Activated B cell treated with CpG ODN at 0.5 μM for 24 hours (primary cell): ENCODE measurements at regions of chr11 and their contacts with region 1.

Region 1: DNA sequence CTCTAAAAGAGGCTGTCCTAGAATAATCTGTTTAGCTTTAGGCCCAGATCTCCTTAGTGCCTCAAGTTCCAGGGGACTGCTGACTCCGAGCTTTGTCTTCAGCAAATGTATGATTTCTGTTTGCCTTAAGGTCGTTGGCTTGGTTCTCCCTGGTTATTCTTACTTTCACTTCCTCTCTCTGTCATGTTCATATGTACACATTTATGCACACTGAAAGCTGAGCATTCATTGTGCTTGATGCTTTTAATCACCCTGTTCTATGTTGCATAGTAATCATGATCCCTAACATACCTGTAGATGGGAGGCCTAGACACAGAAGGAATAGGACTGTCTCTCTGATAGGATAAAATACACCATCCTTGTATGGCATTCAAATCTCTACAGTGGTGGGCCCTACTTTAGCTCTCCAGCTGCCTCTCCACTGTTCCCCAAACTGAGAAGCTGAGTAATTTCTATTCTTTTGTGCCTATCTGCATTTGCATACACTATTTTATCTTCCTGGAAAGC is 7.2 kb downstream of the PPFIBP2 start:
- DNase-seq: no peak
- ATAC-seq: peak; percentile 66
- H3K4me3 Mint-ChIP-seq: no peak overlapping the region
- H3K27ac Mint-ChIP-seq: no peak overlapping the region
- H3K4me1 Mint-ChIP-seq: no peaks in the 10 kb centered on the region
- H3K27me3 Mint-ChIP-seq: no peaks in the 10 kb centered on the region
- CTCF ChIP-seq: no peak

Region 2: DNA sequence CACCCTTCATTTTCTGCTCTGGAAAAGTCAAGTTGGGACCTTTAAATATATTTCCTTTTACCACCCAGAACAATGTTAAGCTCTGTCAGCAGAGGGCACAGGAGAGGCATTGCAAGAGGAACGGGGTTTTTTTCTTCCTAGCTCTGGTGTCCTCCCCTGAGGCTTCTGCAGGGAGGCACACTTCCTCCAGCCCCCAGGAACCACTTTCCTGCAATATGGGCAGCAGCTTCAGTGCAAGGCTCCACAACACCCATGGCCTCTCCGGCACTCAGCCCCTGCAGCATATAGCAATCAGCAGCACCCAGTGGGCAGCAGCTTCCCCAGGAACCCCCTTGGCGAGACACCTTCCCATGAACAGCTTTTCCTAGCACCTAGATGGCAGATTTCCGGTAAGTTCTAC is 167.9 kb before region 1 on chr11:
- CTCF ChIA-PET with region 1: interaction called, 13 read pairs
- POLR2A ChIA-PET with region 1: no interaction called
- intact Hi-C with region 1: no loop called
- DNase-seq: peak; percentile 23
- ATAC-seq: peak; percentile 62
- H3K4me3 Mint-ChIP-seq: no peak overlapping the region
- H3K27ac Mint-ChIP-seq: no peak overlapping the region
- H3K4me1 Mint-ChIP-seq: peaks cover 3% of the 10 kb centered on the region
- H3K27me3 Mint-ChIP-seq: peaks cover 7% of the 10 kb centered on the region
- CTCF ChIP-seq: no peak

Region 3: GRCh38 chr11:7473717-7474116 is 47.3 kb before region 1 on chr11:
- CTCF ChIA-PET with region 1: no interaction called
- POLR2A ChIA-PET with region 1: interaction called, 3 read pairs
- intact Hi-C with region 1: loop called (anchors 1 kb)
- DNase-seq: peak; percentile 31
- ATAC-seq: peak; percentile 99
- H3K4me3 Mint-ChIP-seq: peak overlapping the region; percentile 47
- H3K27ac Mint-ChIP-seq: peak overlapping the region; percentile 74
- H3K4me1 Mint-ChIP-seq: peaks cover 29% of the 10 kb centered on the region
- H3K27me3 Mint-ChIP-seq: no peaks in the 10 kb centered on the region
- CTCF ChIP-seq: no peak

Region 4: DNA sequence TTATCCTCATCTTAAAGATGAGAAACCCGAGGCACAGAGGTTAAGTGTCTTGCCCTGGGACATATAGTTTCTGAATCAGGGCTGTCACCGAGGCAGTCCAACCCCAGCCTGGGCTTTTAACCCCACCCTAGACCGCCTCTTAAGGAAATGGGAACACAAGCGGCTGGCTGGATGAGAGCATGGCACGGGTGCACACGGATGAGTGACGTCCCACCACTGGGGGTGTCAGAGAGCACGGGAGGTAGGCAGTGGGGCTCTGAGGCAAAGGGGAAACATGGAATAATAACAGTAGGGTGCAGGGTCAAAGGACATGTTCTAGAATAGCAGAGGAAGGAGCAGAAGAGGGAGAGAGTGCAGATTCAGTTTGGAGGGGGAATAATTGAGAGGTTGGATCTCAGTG is 15.1 kb after region 1 on chr11:
- CTCF ChIA-PET with region 1: interaction called, 5 read pairs
- POLR2A ChIA-PET with region 1: interaction called, 32 read pairs
- intact Hi-C with region 1: loop called (anchors 2 kb)
- DNase-seq: no peak
- ATAC-seq: no peak
- H3K4me3 Mint-ChIP-seq: no peak overlapping the region
- H3K27ac Mint-ChIP-seq: no peak overlapping the region
- H3K4me1 Mint-ChIP-seq: peaks cover 67% of the 10 kb centered on the region
- H3K27me3 Mint-ChIP-seq: no peaks in the 10 kb centered on the region
- CTCF ChIP-seq: no peak

Region 5: DNA sequence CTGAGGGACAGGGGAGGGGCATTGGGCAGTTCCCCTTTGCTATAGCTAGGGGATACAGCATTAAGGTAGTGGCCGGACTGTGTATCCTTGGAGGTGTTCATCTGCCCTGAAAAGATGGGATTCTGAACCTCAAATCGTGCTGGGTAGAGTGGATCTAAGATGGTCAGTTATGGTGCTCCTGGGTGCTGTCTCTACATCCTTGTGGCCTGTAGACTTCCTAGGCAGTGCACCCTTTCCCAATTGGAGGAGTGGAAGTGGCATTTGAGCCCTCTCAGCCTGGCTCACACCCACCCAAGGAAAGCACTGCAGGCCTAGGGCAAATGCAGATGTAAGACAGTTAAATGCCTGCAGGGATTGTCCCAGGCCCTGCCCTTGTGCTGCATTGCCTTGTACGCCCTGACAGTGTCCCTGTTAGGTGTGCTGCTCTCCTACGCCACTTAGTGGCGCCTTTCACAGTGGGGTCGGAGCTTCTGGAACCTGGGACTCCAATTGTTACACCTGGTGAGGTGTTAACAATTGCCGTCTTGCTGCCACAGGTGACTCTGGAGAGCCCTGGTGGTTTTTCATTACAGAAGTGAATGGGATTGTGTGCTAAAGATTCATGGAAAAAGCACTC is 27.7 kb after region 1 on chr11:
- CTCF ChIA-PET with region 1: interaction called, 5 read pairs
- POLR2A ChIA-PET with region 1: interaction called, 6 read pairs
- intact Hi-C with region 1: loop called (anchors 2 kb)
- DNase-seq: no peak
- ATAC-seq: peak; percentile 89
- H3K4me3 Mint-ChIP-seq: no peak overlapping the region
- H3K27ac Mint-ChIP-seq: no peak overlapping the region
- H3K4me1 Mint-ChIP-seq: peaks cover 10% of the 10 kb centered on the region
- H3K27me3 Mint-ChIP-seq: no peaks in the 10 kb centered on the region
- CTCF ChIP-seq: no peak

Region 6: GRCh38 chr11:7672960-7673723 is 152.1 kb after region 1 on chr11 and contains the start of gene CYB5R2:
- CTCF ChIA-PET with region 1: no interaction called
- POLR2A ChIA-PET with region 1: interaction called, 10 read pairs
- intact Hi-C with region 1: no loop called
- DNase-seq: peak; percentile 34
- ATAC-seq: peak; percentile 36
- H3K4me3 Mint-ChIP-seq: peak within 1 kb of the TSS; percentile 85
- H3K27ac Mint-ChIP-seq: peak within 1 kb of the TSS; percentile 86
- H3K4me1 Mint-ChIP-seq: peaks cover 52% of the 10 kb centered on the region
- H3K27me3 Mint-ChIP-seq: peaks cover 17% of the 10 kb centered on the region
- CTCF ChIP-seq: no peak
- total RNA-seq, gene CYB5R2: 22.3 and 25.9 TPM in 2 replicates